Activated CD4-positive, alpha-beta T cell treated with anti-CD3 and anti-CD28 coated beads for 36 hours (primary cell): ENCODE measurements at regions of chr6 and their contacts with region 1.

Region 1: DNA sequence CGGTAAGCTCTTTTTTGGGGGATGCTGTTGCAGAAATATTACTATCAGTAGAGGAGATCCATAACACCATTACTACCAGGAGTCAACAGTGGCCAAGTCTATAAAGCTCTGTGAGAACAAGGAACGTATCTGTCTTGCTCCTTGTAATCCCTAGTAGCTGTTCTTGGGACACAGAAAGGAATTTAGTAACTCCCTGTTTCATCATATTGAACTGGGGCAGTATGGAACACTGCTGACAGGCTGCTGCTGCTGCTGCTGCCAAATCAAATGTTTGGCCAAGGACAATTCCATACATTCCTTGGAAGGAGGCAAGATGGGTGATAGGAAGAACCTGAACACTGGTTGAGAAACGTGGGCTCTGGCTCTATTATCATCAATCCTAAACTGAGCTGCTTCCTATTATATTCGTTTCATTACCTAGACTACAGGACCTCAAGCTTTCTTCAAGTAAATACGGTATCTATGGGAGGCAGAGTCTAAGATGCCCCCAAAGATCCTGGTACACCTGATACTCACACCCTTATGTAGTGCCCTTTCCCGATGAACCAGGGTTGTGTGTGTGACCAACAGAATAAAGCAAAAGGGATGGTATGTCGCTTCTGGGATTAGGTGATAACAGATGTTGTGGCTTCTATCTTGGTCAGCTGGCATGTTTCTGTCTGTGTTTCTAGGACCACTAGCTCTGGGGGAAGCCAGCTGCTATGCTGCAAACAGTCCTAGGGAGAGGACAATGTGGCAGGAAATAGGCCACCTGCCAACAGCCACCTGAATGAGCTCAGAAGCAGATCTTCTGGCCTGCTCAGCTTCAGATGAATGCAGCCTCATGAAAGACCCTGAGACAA is 39.5 kb downstream of the ELOVL5 start:
- DNase-seq: no peak
- ATAC-seq: no peak
- H3K4me3 Mint-ChIP-seq: no peak overlapping the region
- H3K27ac Mint-ChIP-seq: peak overlapping the region; percentile 59
- H3K4me1 Mint-ChIP-seq: peaks cover 81% of the 10 kb centered on the region
- H3K27me3 Mint-ChIP-seq: no peaks in the 10 kb centered on the region

Region 2: GRCh38 chr6:52995913-52996645 is 313.2 kb before region 1 on chr6:
- CTCF ChIA-PET with region 1: no interaction called
- POLR2A ChIA-PET with region 1: no interaction called
- intact Hi-C with region 1: loop called in 1 of 2 experiments (anchors 5 kb)
- DNase-seq: peak; percentile 68
- ATAC-seq: no peak
- H3K4me3 Mint-ChIP-seq: peak overlapping the region; percentile 83
- H3K27ac Mint-ChIP-seq: peak overlapping the region; percentile 77
- H3K4me1 Mint-ChIP-seq: peaks cover 32% of the 10 kb centered on the region
- H3K27me3 Mint-ChIP-seq: peaks cover 4% of the 10 kb centered on the region

Region 3: DNA sequence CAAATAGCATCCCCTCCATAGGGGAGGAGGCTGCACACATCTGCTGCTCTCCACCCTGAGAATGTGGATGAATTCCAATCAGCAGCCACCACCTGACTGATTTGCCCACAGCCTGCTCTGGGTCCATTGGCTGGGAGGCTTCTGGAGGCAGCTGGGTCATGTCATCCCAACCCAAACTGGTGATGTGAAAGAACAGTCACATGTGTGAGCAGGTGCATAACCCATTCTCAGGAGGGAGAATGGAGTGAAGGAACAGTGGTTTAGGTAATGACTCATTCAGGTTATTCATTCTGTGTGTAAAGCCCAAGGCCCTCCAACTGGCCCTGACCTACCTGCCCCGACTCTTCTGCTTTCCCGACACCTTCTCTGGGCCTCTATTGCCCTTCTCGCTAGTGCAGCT is 69.8 kb before region 1 on chr6:
- CTCF ChIA-PET with region 1: no interaction called
- POLR2A ChIA-PET with region 1: no interaction called
- intact Hi-C with region 1: no loop called
- DNase-seq: peak; percentile 29
- ATAC-seq: peak; percentile 47
- H3K4me3 Mint-ChIP-seq: no peak overlapping the region
- H3K27ac Mint-ChIP-seq: no peak overlapping the region
- H3K4me1 Mint-ChIP-seq: peaks cover 37% of the 10 kb centered on the region
- H3K27me3 Mint-ChIP-seq: no peaks in the 10 kb centered on the region

Region 4: GRCh38 chr6:53326372-53327016 is 17.2 kb after region 1 on chr6:
- CTCF ChIA-PET with region 1: interaction called, 6 read pairs
- POLR2A ChIA-PET with region 1: no interaction called
- intact Hi-C with region 1: loop called (anchors 1 to 2 kb)
- DNase-seq: peak; percentile 41
- ATAC-seq: peak; percentile 17
- H3K4me3 Mint-ChIP-seq: no peak overlapping the region
- H3K27ac Mint-ChIP-seq: peak overlapping the region; percentile 23
- H3K4me1 Mint-ChIP-seq: peaks cover 68% of the 10 kb centered on the region
- H3K27me3 Mint-ChIP-seq: no peaks in the 10 kb centered on the region

Region 5: DNA sequence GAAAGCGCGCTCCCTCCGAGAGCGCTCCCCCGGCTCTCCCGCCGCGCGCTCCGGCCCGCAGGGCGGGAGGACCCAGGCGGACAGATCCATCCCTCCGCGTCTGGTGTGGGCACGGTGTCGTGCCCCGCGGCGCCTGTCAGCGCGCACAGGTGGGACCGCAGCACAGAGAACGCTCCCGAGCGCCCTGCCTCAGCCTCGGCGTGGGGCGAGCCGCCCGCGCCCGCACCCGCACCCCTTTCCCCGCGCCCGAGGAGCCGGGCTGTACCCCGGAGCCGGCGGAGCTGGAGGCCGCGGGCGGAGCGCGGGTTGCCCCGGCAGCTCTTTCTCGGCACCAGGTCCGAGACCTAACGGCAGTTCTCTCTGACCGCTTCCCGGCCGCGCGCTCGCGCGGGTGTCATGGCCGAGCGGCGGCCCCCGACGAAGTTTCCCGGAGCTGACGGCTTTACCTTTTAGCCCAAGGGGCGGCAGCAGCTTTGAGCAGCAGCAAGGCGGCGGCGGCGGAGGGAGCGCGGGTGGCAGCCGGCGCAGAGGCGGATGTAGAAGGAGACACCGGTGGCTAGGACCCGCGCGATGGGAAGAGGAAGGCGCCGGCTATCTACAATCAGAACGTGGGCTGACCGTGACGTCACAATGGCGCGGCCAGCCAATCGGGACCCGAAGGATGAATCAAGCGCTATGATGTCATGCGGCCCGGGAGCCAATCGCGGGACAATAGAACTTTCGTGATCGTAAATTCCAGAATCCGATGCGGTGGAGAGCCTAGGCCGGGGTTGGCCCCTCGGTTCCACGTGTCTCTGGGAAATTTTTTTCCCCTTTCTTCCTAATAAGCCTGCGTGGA is 39.3 kb after region 1 on chr6 and contains the start of gene ELOVL5:
- CTCF ChIA-PET with region 1: interaction called, 3 read pairs
- POLR2A ChIA-PET with region 1: interaction called, 3 read pairs
- intact Hi-C with region 1: loop called (anchors 1 to 2 kb)
- DNase-seq: peak; percentile 99
- ATAC-seq: peak; percentile 79
- H3K4me3 Mint-ChIP-seq: peak within 1 kb of the TSS; percentile 93
- H3K27ac Mint-ChIP-seq: peak within 1 kb of the TSS; percentile 91
- H3K4me1 Mint-ChIP-seq: peaks cover 46% of the 10 kb centered on the region
- H3K27me3 Mint-ChIP-seq: no peaks in the 10 kb centered on the region
- total RNA-seq, gene ELOVL5: 98.1 to 106 TPM

Region 6: DNA sequence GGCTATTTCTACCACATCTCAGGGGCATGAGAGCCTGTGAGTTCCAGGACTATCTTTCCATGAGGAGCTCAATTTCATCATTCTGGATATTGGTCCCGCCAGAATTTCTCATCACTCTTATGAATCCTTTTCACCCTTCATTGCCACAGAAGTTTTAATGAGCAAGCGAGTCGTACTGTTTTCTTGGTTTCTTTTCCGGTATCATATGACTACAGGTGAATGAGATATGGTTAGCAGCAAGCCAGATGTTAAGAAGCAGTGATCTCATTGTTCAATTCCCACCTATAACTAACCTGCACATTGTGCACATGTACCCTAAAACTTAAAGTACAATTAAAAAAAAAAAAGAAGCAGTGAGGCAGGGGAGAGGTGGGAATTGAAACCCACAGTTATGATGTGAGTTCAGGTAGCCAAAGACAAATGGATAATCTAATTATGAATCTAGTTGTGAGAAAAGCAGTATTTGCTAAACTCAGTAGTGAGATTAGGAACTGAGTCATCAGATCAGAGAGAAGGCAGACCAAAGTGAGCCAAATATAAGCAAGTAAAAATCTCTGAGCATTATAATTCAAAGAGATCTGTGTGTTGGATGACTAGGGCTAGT is 117.5 kb after region 1 on chr6:
- CTCF ChIA-PET with region 1: no interaction called
- POLR2A ChIA-PET with region 1: no interaction called
- intact Hi-C with region 1: loop called (anchors 1 to 2 kb)
- DNase-seq: no peak
- ATAC-seq: peak; percentile 96
- H3K4me3 Mint-ChIP-seq: no peak overlapping the region
- H3K27ac Mint-ChIP-seq: peak overlapping the region; percentile 26
- H3K4me1 Mint-ChIP-seq: peaks cover 23% of the 10 kb centered on the region
- H3K27me3 Mint-ChIP-seq: peaks cover 11% of the 10 kb centered on the region

Region 7: DNA sequence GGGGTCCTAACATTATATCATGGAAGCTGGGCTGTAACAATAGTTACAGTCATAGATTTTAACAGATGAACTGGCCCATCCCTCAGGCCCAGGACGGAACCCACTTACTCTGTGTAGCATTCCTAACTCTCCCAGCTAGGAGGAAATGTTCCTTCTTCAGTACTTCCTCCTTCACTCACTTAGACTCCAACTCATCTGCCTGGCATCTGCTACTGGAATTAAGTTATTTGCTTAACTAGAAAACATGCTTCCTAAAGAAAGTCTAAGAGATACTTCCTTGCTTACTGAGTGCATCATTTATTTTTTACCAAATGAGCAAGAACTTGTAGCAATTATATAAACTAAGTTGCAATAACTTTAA is 215.2 kb after region 1 on chr6:
- CTCF ChIA-PET with region 1: no interaction called
- POLR2A ChIA-PET with region 1: no interaction called
- intact Hi-C with region 1: no loop called
- DNase-seq: no peak
- ATAC-seq: no peak
- H3K4me3 Mint-ChIP-seq: no peak overlapping the region
- H3K27ac Mint-ChIP-seq: no peak overlapping the region
- H3K4me1 Mint-ChIP-seq: peaks cover 5% of the 10 kb centered on the region
- H3K27me3 Mint-ChIP-seq: no peaks in the 10 kb centered on the region